Activated CD4-positive, alpha-beta T cell treated with anti-CD3 and anti-CD28 coated beads for 36 hours (primary cell): ENCODE measurements at regions of chr1 and their contacts with region 1.

Region 1: GRCh38 chr1:231357831-231358354 is 19.8 kb downstream of the SPRTN start:
- DNase-seq: peak; percentile 52
- ATAC-seq: peak; percentile 85
- H3K4me3 Mint-ChIP-seq: no peak overlapping the region
- H3K27ac Mint-ChIP-seq: peak overlapping the region; percentile 59
- H3K4me1 Mint-ChIP-seq: peaks cover 6% of the 10 kb centered on the region
- H3K27me3 Mint-ChIP-seq: no peaks in the 10 kb centered on the region

Region 2: GRCh38 chr1:231590453-231591198 is 232.7 kb after region 1 on chr1:
- CTCF ChIA-PET with region 1: interaction called, 10 read pairs
- POLR2A ChIA-PET with region 1: no interaction called
- intact Hi-C with region 1: loop called (anchors 1 kb)
- DNase-seq: peak; percentile 71
- ATAC-seq: peak; percentile 87
- H3K4me3 Mint-ChIP-seq: no peak overlapping the region
- H3K27ac Mint-ChIP-seq: no peak overlapping the region
- H3K4me1 Mint-ChIP-seq: no peaks in the 10 kb centered on the region
- H3K27me3 Mint-ChIP-seq: no peaks in the 10 kb centered on the region

Region 3: DNA sequence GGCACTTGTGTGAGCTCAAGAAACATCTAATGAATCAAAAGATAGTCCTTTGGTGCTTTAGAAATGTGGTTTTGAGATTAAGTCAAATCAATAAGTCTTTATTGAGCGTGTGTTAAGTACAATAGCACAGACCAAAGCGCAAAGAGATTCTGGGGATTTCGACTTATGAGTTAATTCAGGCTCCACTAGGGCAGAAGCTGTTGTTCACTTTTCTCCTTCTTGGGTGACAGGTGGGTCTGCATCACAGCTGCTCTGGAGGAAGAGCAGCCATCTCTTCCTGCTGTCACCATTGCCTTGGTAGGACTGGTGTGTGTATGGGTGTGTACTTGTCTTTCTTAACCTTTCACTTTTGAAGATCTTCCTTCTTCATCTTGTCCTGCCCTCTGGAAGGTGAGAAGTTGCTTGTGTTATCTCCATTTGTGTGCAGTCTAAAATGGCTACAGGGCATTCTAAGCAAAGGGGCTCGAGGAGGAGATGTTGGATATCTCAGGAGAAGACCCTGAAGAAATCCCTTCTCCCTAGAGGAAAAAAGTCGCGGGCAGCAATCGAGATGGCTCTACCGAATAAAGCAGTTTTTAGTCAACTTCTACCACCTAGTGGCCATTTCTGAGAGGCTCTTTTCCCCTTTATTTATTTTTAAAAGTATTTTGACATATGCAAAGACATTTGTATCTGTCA is 245.8 kb after region 1 on chr1:
- CTCF ChIA-PET with region 1: interaction called, 14 read pairs
- POLR2A ChIA-PET with region 1: no interaction called
- intact Hi-C with region 1: loop called (anchors 1 kb)
- DNase-seq: peak; percentile 50
- ATAC-seq: peak; percentile 85
- H3K4me3 Mint-ChIP-seq: peak overlapping the region; percentile 73
- H3K27ac Mint-ChIP-seq: peak overlapping the region; percentile 80
- H3K4me1 Mint-ChIP-seq: peaks cover 5% of the 10 kb centered on the region
- H3K27me3 Mint-ChIP-seq: no peaks in the 10 kb centered on the region

Region 4: GRCh38 chr1:231806623-231807495 is 449.0 kb after region 1 on chr1:
- CTCF ChIA-PET with region 1: interaction called, 3 read pairs
- POLR2A ChIA-PET with region 1: no interaction called
- intact Hi-C with region 1: loop called in 1 of 2 experiments (anchors 5 kb)
- DNase-seq: peak; percentile 68
- ATAC-seq: peak; percentile 90
- H3K4me3 Mint-ChIP-seq: no peak overlapping the region
- H3K27ac Mint-ChIP-seq: no peak overlapping the region
- H3K4me1 Mint-ChIP-seq: no peaks in the 10 kb centered on the region
- H3K27me3 Mint-ChIP-seq: no peaks in the 10 kb centered on the region